ENCODE measurements at regions of chr3 and their contacts with region 1.

Region 1: DNA sequence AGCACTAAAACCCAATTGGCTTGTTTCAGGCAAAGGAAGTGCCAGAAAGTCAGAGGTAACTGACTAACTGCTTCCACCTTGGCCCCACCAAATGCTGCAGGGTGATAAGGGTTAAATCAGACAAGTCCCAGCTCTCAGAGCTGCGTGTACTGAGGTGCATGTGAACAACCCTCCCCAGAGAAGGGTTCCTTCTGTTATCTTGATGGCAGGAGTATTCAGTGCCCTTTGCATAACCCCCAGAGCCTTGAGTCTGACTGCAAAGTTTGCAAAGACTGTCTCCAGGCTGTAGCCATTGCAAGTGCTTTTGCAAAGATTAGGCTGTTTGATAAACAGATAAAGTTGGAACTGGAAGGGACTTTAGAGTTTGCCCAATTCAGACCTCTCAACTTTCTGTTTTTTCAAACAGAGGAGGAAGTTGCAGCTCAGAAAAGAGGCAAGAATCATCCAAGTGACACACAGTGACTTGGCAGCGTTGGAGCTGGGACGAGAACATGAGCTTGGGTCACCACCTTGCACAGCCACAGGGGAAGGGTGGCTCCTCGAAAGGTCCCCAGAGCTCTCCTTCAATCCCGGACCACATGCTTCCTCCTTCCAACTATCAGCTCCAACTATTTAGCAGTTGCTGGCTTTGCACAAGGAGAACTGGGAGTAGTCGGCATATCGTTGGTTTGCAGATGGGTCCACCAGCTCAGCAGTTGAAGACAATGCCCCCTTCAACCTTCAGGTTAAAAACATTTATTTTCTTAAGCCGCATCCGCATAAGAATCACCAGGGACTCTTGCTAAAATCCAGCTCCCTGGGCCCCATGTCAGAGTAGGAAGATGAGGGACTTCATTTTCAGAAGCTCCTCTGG is 224.8 kb upstream of the HES1 start:
- DNase-seq: no peak

Region 2: DNA sequence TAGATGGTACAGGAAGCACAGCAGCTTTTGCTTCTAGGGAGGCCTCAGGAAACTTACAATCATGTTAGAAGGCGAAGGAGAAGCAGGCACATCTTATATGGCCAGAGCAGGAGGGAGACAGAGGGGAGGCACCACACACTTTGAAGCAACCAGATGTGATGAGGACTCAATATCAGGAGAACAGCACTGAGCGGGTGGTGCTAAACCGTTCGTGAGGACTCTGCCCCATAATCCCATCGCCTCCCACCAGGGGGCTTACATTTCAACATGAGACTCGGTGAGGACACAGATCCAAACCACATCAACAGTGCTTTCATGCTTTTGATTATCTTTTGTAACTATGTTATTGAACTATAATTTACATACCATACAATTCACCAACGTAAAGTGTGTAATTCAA is 729.7 kb after region 1 on chr3:
- intact Hi-C with region 1: loop called in 1 of 2 experiments (anchors 10 kb)
- DNase-seq: peak; percentile 47